ENCODE measurements at regions of chr6 and their contacts with region 1.

Region 1: GRCh38 chr6:27795697-27796494 is 116.3 kb downstream of the OR2B2 start:
- DNase-seq: peak; percentile 91
- ATAC-seq: peak; percentile 62
- H3K4me3 ChIP-seq: no peak overlapping the region
- H3K27ac ChIP-seq: no peak overlapping the region
- H3K4me1 ChIP-seq: peaks cover 22% of the 10 kb centered on the region
- H3K27me3 ChIP-seq: no peaks in the 10 kb centered on the region
- CTCF ChIP-seq: peak; percentile 69 to 80 (median 80)
- EP300 ChIP-seq: peak in 1 of 2 experiments; percentile 75; a peak in 1 of 4 replicates
- POLR2A ChIP-seq: no peak
- RAD21 ChIP-seq: peak; percentile 77

Region 2: DNA sequence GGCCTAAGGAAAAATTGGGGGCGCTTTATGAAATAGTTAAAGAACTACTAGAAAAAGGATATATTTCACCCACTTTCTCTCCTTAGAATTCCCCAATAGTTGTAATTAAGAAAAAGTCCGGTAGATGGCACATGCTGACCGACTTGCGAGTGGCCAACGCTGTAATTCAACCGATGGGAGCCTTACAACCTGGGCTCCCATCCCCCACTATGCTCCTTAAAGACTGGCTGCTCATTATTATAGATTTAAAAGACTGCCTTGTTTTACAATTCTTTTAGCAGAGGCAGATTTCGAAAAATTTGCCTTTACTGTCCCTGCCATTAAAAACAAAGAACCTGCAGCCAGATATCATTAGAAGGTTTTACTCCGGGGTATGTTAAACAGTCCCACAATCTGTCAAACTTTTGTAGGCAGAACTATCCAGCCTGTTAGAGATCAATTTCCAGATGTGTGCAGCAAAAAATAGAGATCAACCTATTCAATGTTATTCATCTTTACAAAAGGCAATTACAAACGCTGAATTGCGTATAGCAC is 606.9 kb before region 1 on chr6:
- CTCF ChIA-PET with region 1: interaction called, 13 read pairs
- POLR2A ChIA-PET with region 1: no interaction called
- RAD21 ChIA-PET with region 1: interaction called, 7 read pairs
- SMC1A ChIA-PET with region 1: interaction called, 7 read pairs
- in situ Hi-C with region 1: no loop called
- intact Hi-C with region 1: no loop called
- DNase-seq: peak; percentile 50
- ATAC-seq: peak; percentile 91
- H3K4me3 ChIP-seq: peak overlapping the region; percentile 75
- H3K27ac ChIP-seq: peak overlapping the region; percentile 78
- H3K4me1 ChIP-seq: no peaks in the 10 kb centered on the region
- H3K27me3 ChIP-seq: no peaks in the 10 kb centered on the region
- CTCF ChIP-seq: peak; percentile 49 to 71 (median 59); a peak in 5 of 6 replicates
- EP300 ChIP-seq: no peak
- POLR2A ChIP-seq: no peak
- RAD21 ChIP-seq: peak; percentile 90

Region 3: GRCh38 chr6:27518881-27519795 is 276.8 kb before region 1 on chr6:
- CTCF ChIA-PET with region 1: interaction called, 5 read pairs
- POLR2A ChIA-PET with region 1: no interaction called
- RAD21 ChIA-PET with region 1: interaction called, 16 read pairs
- SMC1A ChIA-PET with region 1: interaction called, 16 read pairs
- in situ Hi-C with region 1: no loop called
- intact Hi-C with region 1: loop called (anchors 1 kb)
- DNase-seq: peak; percentile 83
- ATAC-seq: peak; percentile 92
- H3K4me3 ChIP-seq: peak overlapping the region; percentile 83
- H3K27ac ChIP-seq: peak overlapping the region; percentile 67
- H3K4me1 ChIP-seq: no peaks in the 10 kb centered on the region
- H3K27me3 ChIP-seq: 0 out of 4 replicates have a peak, but pooled peaks cover 0 to 5% of the 10 kb centered on the region in 2 experiments
- CTCF ChIP-seq: peak; percentile 61 to 72 (median 69)
- EP300 ChIP-seq: peak in 1 of 2 experiments; percentile 15; a peak in 1 of 4 replicates
- POLR2A ChIP-seq: no peak
- RAD21 ChIP-seq: peak; percentile 68

Region 4: GRCh38 chr6:27687154-27688013 is 108.5 kb before region 1 on chr6:
- CTCF ChIA-PET with region 1: interaction called, 4 read pairs
- POLR2A ChIA-PET with region 1: no interaction called
- RAD21 ChIA-PET with region 1: interaction called, 8 read pairs
- SMC1A ChIA-PET with region 1: interaction called, 11 read pairs
- in situ Hi-C with region 1: no loop called
- intact Hi-C with region 1: no loop called
- DNase-seq: peak; percentile 67
- ATAC-seq: peak; percentile 90
- H3K4me3 ChIP-seq: peak overlapping the region; percentile 76
- H3K27ac ChIP-seq: peak overlapping the region; percentile 76
- H3K4me1 ChIP-seq: no peaks in the 10 kb centered on the region
- H3K27me3 ChIP-seq: no peaks in the 10 kb centered on the region
- CTCF ChIP-seq: peak; percentile 91 to 96 (median 93)
- EP300 ChIP-seq: no peak
- POLR2A ChIP-seq: peak; percentile 48; the same call in 1 of the 2 replicates
- RAD21 ChIP-seq: peak; percentile 80

Region 5: DNA sequence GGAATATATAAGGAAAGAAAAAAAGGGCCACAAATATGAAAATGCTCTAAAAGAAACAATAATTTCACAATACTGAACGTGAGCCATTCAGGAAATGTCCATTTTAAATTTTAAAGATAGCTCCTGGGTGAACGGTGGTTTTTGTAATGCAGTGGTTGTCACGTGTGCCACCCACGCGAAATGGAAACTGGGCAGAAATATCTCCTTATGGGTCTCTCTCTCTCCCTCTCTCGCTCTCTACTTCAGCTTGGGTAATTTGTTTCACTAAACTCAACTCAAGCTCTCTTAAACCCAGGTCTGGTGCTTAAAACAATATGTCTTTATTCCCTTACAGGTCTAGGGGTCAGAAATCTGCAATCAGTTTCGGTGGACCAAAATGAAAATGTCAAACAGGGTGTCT is 34.5 kb before region 1 on chr6:
- CTCF ChIA-PET with region 1: no interaction called
- POLR2A ChIA-PET with region 1: interaction called, 5 read pairs
- RAD21 ChIA-PET with region 1: interaction called, 19 read pairs
- SMC1A ChIA-PET with region 1: interaction called, 30 read pairs
- in situ Hi-C with region 1: no loop called
- intact Hi-C with region 1: no loop called
- DNase-seq: no peak
- ATAC-seq: peak; percentile 43
- H3K4me3 ChIP-seq: no peak overlapping the region
- H3K27ac ChIP-seq: peak overlapping the region; percentile 66
- H3K4me1 ChIP-seq: peaks cover 26% of the 10 kb centered on the region
- H3K27me3 ChIP-seq: no peaks in the 10 kb centered on the region
- CTCF ChIP-seq: no peak
- EP300 ChIP-seq: no peak
- POLR2A ChIP-seq: no peak
- RAD21 ChIP-seq: no peak

Region 6: GRCh38 chr6:27809939-27810767 is 14.3 kb after region 1 on chr6:
- CTCF ChIA-PET with region 1: interaction called, 13 read pairs
- POLR2A ChIA-PET with region 1: interaction called, 9 read pairs
- RAD21 ChIA-PET with region 1: interaction called, 10 read pairs
- SMC1A ChIA-PET with region 1: interaction called, 24 read pairs
- in situ Hi-C with region 1: no loop called
- intact Hi-C with region 1: no loop called
- DNase-seq: peak; percentile 98
- ATAC-seq: peak; percentile 43
- H3K4me3 ChIP-seq: peak overlapping the region; percentile 74
- H3K27ac ChIP-seq: peak overlapping the region; percentile 82
- H3K4me1 ChIP-seq: peaks cover 25% of the 10 kb centered on the region
- H3K27me3 ChIP-seq: no peaks in the 10 kb centered on the region
- CTCF ChIP-seq: peak in 1 of 3 experiments; percentile 19; a peak in 2 of 6 replicates
- EP300 ChIP-seq: no peak
- POLR2A ChIP-seq: peak; percentile 95
- RAD21 ChIP-seq: no peak

Region 7: DNA sequence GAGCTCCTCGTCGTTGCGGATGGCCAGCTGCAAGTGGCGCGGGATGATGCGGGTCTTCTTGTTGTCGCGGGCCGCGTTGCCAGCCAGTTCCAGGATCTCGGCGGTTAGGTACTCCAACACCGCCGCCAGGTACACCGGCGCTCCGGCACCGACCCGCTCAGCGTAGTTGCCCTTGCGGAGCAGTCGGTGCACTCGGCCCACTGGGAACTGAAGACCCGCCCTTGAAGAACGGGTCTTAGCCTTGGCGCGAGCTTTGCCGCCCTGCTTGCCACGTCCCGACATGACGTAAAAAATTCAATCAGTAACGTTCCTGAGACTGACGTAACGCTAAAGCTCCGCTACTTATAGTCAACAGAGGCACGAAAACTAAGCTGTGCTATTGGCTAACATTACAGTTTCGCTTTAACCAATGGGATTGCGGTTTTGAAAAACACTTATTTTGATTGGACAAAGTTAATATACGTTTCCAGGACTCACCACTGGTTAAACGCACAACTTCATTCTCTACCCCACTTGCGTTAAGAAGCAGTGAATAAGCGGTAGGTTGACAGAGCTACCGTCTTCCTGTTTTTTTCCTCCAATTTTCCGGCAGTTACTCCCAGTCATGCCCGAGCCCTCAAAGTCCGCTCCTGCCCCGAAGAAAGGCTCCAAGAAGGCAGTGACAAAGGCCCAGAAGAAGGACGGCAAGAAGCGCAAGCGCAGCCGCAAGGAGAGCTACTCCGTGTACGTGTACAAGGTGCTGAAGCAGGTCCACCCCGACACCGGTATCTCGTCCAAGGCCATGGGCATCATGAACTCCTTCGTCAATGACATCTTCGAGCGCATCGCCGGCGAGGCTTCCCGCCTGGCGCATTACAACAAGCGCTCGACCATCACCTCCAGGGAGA is 42.4 kb after region 1 on chr6:
- CTCF ChIA-PET with region 1: no interaction called
- POLR2A ChIA-PET with region 1: no interaction called
- RAD21 ChIA-PET with region 1: no interaction called
- SMC1A ChIA-PET with region 1: no interaction called
- in situ Hi-C with region 1: no loop called
- intact Hi-C with region 1: no loop called
- DNase-seq: peak; percentile 100
- ATAC-seq: peak; percentile 81
- H3K4me3 ChIP-seq: peak overlapping the region; percentile 87
- H3K27ac ChIP-seq: peak overlapping the region; percentile 93
- H3K4me1 ChIP-seq: no peaks in the 10 kb centered on the region
- H3K27me3 ChIP-seq: no peaks in the 10 kb centered on the region
- CTCF ChIP-seq: no peak
- EP300 ChIP-seq: 0 out of 4 replicates have a peak, but pooled peaks of 1 of the 2 experiments have one; percentile 3
- POLR2A ChIP-seq: peak; percentile 81
- RAD21 ChIP-seq: no peak